ENCODE measurements at regions of chr11 and their contacts with region 1.

Region 1: DNA sequence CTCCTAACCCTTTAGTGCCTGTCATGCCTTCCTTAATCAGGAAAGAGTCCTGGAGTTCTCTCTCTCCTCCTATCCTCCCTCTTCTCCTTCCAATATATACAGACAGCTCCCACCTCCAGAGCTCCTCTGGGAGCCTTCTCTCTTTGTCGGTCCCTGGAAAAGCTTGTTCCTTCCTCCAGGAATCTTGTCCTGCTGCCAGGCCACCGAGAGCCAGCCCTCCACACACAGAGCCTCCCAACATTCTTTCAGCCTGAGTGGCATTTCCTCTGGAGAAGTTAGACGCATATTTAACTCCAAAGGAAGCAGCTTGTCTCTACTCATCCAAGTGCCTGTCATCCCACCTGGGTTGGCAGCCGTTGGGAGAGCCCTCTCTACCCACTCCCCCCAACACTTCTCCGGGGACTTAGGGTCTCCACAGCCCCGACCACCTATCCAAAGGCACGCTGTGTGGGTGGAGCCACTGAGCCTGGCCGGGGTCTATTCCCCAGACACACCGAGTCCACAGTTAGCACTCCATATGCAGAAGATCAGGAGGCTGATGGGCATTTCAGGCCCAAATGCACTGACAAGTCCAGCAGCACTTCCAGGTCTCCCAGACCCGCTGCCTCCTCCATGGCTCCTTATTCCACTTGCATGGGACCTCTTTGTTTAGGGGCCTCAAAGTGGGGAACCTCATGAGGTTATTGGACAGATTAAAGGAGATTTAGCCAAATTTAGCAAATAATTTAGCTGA is 31.1 kb downstream of the DKK3 start:
- DNase-seq: peak; percentile 95
- H3K4me3 ChIP-seq: no peak overlapping the region
- H3K27ac ChIP-seq: peak overlapping the region; percentile 95
- H3K4me1 ChIP-seq: peaks cover 55% of the 10 kb centered on the region
- H3K27me3 ChIP-seq: no peaks in the 10 kb centered on the region
- CTCF ChIP-seq: no peak
- POLR2A ChIP-seq: peak; percentile 51

Region 2: DNA sequence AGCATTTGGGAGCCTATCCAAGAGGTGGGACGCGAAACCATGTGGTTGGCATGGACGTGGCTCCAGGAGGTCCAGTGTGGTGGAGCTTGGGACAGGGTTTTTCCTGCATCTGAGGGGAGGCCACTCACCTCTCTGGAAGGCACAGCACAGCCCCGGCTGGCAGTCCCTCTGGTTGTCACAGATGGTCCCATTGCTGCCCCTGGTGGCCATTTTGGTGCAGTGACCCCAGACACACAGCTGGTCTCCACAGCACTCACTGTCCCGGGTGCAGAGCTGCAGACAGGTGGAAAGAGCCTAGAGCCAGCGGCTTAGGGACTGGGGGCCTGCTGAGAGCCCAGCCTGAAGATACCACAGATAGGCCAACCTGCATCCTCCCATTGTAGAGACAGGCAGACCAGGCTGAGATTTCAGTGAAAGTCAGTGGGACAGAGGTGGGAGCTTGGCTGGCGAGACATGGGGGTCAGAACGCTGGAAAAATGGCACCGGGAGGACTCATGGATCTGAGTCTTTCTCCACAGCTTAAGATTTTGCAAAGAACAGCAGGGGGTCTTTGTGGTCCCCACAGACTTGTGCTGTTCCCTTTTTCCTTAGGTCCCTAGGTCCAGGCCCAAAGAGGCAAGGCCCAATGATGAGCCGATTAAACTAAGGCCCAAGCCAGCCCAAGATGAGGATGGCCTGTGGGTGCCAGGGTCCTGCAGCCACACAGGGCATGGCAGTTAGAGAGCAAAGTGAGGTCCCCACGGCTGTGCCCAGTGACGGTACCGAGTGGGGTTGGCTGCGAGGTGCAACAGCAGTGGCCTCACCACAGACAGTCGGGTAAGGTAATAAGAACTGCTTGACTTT is 10.3 kb before region 1 on chr11:
- CTCF ChIA-PET with region 1: interaction called, 31 read pairs
- POLR2A ChIA-PET with region 1: interaction called, 3 read pairs
- dilution Hi-C with region 1: no loop called
- intact Hi-C with region 1: no loop called
- DNase-seq: peak; percentile 49
- H3K4me3 ChIP-seq: no peak overlapping the region
- H3K27ac ChIP-seq: no peak overlapping the region
- H3K4me1 ChIP-seq: no peaks in the 10 kb centered on the region
- H3K27me3 ChIP-seq: no peaks in the 10 kb centered on the region
- CTCF ChIP-seq: peak; percentile 80 to 86
- POLR2A ChIP-seq: no peak

Region 3: DNA sequence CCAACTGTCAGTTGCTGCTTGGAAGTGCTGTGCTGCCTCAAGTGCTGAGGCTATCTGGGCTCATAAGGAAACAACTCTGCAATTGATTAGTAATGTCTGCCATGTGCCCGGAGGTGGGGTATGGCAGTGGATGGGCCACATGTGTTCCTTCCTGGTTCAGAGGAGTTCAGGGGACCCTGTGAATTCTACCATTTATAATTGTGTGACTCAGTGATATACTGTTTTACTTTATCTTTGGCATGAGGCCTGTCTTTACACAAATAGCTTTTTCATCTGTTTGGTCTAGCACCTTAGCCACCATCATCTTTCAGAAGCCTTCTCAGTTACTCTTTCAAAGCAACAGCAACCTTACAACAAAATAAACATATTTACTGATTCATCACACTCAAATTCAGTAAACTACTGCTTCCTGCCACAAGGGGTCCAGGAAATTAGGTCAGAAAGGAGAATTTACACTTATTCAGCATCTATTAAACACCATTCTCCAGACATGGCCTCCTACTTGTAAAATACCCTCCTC is 10.2 kb after region 1 on chr11:
- CTCF ChIA-PET with region 1: interaction called, 17 read pairs
- POLR2A ChIA-PET with region 1: interaction called, 3 read pairs
- dilution Hi-C with region 1: no loop called
- intact Hi-C with region 1: loop called (anchors 1 kb)
- DNase-seq: peak; percentile 78
- H3K4me3 ChIP-seq: no peak overlapping the region
- H3K27ac ChIP-seq: peak overlapping the region; percentile 75
- H3K4me1 ChIP-seq: peaks cover 43% of the 10 kb centered on the region
- H3K27me3 ChIP-seq: no peaks in the 10 kb centered on the region
- CTCF ChIP-seq: peak in 1 of 2 donors; percentile 36
- POLR2A ChIP-seq: peak; percentile 57

Region 4: DNA sequence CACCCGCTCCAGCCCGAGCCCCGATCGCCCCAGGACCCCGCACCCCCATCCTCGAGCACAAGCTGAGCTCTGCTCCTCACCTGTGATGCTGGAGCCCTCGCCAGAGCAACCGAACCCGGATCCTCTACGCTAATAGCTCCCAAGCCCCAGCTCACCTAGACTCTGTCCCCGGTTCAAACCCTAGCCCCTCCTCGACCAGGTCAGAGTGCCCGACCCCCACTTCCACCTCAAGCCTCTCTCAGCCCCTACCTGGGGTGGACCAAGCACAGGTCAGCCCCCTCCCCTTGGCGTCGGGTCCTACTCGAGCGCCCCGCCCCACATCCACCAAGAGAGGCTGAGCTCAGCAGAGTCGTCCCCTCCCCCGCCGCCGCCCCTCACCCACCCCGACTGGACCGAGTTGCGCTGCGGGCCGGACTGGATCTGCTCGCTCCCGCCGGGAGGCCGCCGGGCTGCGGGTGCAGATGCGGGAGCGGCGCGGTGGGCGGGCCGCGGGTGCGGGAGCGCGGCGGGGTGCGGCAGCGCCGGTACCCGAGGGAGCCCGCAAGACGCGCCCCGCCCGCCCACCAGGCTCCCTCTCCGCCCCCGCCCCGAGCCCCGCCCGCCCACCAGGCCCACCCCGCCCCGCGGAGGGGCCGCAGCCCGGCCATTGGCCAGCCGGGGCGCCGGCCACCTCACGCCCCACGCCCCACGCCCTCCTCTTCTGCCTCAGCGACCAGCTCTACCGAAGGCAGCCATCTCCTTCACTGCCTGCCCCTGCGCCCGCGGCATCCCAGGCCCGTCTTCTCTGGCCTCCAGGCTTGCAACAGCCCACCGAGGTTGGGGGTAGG is 31.6 kb after region 1 on chr11:
- CTCF ChIA-PET with region 1: interaction called, 13 read pairs
- POLR2A ChIA-PET with region 1: interaction called, 5 read pairs
- dilution Hi-C with region 1: no loop called
- intact Hi-C with region 1: loop called (anchors 1 kb)
- DNase-seq: peak; percentile 69
- H3K4me3 ChIP-seq: peak overlapping the region; percentile 79 to 97 (median 91)
- H3K27ac ChIP-seq: peak overlapping the region; percentile 12
- H3K4me1 ChIP-seq: peaks cover 37% of the 10 kb centered on the region
- H3K27me3 ChIP-seq: peaks cover 0 to 2% of the 10 kb centered on the region in 2 experiments
- CTCF ChIP-seq: no peak
- POLR2A ChIP-seq: peak; percentile 20

Region 5: DNA sequence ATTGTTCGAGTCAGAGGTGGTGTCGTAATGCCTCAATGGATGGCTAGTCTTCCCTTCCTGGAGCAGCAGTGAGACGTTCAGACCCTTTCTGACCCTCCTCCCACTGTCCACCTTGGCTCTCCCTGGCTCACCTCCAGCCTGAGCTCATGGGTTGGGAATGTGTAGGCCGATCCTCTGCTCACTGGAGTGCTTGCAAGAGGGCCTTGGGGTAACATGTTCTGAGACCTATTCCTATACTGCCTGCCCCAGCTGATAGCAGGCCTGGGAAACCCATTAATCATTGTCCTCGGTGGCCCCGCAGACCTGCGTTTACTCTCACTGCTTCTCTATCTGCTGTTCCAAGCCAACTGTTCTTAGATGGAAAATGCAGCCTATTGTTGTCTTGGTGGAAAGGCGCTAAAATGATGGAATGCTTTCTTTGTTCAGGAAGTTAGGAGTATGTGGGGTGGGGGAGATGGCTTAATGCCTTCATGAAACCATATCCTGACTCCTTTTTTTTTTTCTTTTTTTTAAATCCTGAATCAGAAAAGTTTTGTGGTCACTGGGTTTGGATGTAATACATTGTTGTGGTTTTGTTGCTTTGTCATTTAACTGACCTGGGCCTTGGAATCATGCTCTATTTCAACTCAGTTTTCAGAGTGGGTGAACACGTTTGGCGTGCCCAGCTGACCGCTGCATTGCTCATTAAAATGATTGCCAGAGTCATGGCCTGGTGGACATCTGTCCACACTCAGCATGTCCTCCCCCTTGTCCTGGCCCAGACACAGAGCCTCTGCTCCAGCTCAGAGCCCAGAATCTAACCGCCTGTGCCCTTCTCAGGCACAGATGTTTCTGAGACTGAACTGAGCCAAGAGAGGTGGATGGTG is 205.5 kb after region 1 on chr11:
- CTCF ChIA-PET with region 1: no interaction called
- POLR2A ChIA-PET with region 1: no interaction called
- dilution Hi-C with region 1: no loop called
- intact Hi-C with region 1: loop called (anchors 5 kb)
- DNase-seq: peak; percentile 89
- H3K4me3 ChIP-seq: no peak overlapping the region
- H3K27ac ChIP-seq: peak overlapping the region; percentile 99
- H3K4me1 ChIP-seq: peaks cover 54% of the 10 kb centered on the region
- H3K27me3 ChIP-seq: no peaks in the 10 kb centered on the region
- CTCF ChIP-seq: no peak
- POLR2A ChIP-seq: no peak

Region 6: DNA sequence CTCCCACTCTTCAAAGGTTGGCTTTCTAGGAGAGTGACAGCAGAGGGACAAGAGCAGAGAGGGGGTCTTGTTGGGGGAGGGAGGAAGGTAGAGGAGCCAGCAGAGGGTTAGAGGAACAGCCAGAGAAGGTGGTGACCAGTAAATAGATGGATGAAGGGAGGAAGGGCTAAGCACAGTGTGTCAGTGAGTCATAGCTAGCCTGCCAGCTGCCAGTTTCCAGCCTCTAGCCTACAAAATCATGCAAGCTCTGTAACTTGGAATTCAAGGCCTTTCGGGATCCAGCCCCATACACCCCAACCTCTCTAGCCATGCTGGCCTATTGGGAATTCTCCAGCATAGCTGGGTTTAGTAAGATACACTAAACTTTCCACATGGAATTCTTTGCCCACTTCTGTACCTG is 549.4 kb after region 1 on chr11:
- CTCF ChIA-PET with region 1: no interaction called
- POLR2A ChIA-PET with region 1: no interaction called
- dilution Hi-C with region 1: no loop called
- intact Hi-C with region 1: no loop called
- DNase-seq: peak; percentile 24
- H3K4me3 ChIP-seq: no peak overlapping the region
- H3K27ac ChIP-seq: no peak overlapping the region
- H3K4me1 ChIP-seq: no peaks in the 10 kb centered on the region
- H3K27me3 ChIP-seq: no peaks in the 10 kb centered on the region
- CTCF ChIP-seq: no peak
- POLR2A ChIP-seq: no peak

Measured in endothelial cell of umbilical vein (primary cell).